ENCODE measurements at regions of chr3 and their contacts with region 1.

Region 1: GRCh38 chr3:77815467-77815866 is 775.6 kb downstream of the ROBO2 start:
- DNase-seq: peak; percentile 45
- H3K4me3 Mint-ChIP-seq: no peak overlapping the region
- H3K27ac Mint-ChIP-seq: no peak overlapping the region
- H3K4me1 Mint-ChIP-seq: no peaks in the 10 kb centered on the region
- H3K27me3 Mint-ChIP-seq: no peaks in the 10 kb centered on the region
- CTCF ChIP-seq: peak; percentile 41

Region 2: GRCh38 chr3:77348231-77348855 is 467.1 kb before region 1 on chr3:
- CTCF ChIA-PET with region 1: no interaction called
- intact Hi-C with region 1: loop called (anchors 5 kb)
- DNase-seq: peak; percentile 24
- H3K4me3 Mint-ChIP-seq: no peak overlapping the region
- H3K27ac Mint-ChIP-seq: no peak overlapping the region
- H3K4me1 Mint-ChIP-seq: peaks cover 12% of the 10 kb centered on the region
- H3K27me3 Mint-ChIP-seq: no peaks in the 10 kb centered on the region
- CTCF ChIP-seq: peak; percentile 18

Region 3: GRCh38 chr3:77530870-77531269 is 284.6 kb before region 1 on chr3:
- CTCF ChIA-PET with region 1: no interaction called
- intact Hi-C with region 1: loop called (anchors 10 kb)
- DNase-seq: no peak
- H3K4me3 Mint-ChIP-seq: no peak overlapping the region
- H3K27ac Mint-ChIP-seq: no peak overlapping the region
- H3K4me1 Mint-ChIP-seq: peaks cover 1% of the 10 kb centered on the region
- H3K27me3 Mint-ChIP-seq: no peaks in the 10 kb centered on the region
- CTCF ChIP-seq: no peak

Region 4: DNA sequence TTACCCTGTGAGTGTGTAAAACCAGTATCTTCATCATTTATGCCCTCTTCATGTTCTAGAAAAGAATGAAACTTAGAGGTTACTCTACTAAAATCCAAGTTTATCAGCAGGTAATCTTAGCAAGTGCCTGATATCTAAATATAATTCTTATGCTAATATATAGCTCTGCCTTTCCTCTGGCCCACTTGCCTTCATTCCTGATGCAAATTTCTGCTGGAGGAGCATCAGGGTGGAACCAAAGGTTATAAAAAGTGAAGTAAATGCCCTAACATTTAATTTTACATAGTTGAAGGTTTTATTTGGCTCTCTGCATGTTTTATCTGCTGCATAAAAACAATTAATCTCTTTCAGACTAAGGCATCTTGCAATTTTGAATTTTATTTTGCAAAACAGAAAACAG is 160.6 kb after region 1 on chr3:
- CTCF ChIA-PET with region 1: no interaction called
- intact Hi-C with region 1: no loop called
- DNase-seq: no peak
- H3K4me3 Mint-ChIP-seq: no peak overlapping the region
- H3K27ac Mint-ChIP-seq: no peak overlapping the region
- H3K4me1 Mint-ChIP-seq: no peaks in the 10 kb centered on the region
- H3K27me3 Mint-ChIP-seq: no peaks in the 10 kb centered on the region
- CTCF ChIP-seq: no peak

Region 5: GRCh38 chr3:78140866-78141658 is 325.6 kb after region 1 on chr3:
- CTCF ChIA-PET with region 1: no interaction called
- intact Hi-C with region 1: loop called (anchors 10 kb)
- DNase-seq: no peak
- H3K4me3 Mint-ChIP-seq: no peak overlapping the region
- H3K27ac Mint-ChIP-seq: peak overlapping the region; percentile 1
- H3K4me1 Mint-ChIP-seq: peaks cover 34% of the 10 kb centered on the region
- H3K27me3 Mint-ChIP-seq: no peaks in the 10 kb centered on the region
- CTCF ChIP-seq: no peak

Measured in Calu3 (cell line).